Breast epithelium (tissue), 4 donors: ENCODE measurements at regions of chr5 and their contacts with region 1.

Region 1: DNA sequence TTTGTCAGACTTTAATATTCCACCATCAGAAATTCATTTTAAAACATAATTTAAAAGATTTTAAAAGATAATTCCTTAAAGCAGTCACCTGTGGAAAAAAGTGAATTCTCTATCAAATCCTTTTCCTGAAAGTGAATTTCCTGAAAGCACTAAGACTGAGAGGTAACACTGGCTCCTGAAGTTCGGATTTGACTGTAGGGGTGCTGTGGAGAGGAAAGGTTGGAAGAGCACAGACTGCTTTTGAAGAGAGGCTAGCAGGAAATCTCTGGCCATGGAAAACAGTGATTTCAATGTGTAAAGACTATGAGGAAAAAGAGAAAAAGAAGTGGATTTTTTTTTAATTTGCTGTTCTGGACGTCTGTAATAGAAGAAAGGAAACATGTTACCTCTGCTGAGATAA is 35.7 kb upstream of the TMEM161B start:
- DNase-seq: no peak
- H3K4me3 ChIP-seq: no peak overlapping the region
- H3K27ac ChIP-seq: no peak overlapping the region
- H3K4me1 ChIP-seq: no peaks in the 10 kb centered on the region
- H3K27me3 ChIP-seq: no peaks in the 10 kb centered on the region
- CTCF ChIP-seq: no peak
- POLR2A ChIP-seq: no peak

Region 2: DNA sequence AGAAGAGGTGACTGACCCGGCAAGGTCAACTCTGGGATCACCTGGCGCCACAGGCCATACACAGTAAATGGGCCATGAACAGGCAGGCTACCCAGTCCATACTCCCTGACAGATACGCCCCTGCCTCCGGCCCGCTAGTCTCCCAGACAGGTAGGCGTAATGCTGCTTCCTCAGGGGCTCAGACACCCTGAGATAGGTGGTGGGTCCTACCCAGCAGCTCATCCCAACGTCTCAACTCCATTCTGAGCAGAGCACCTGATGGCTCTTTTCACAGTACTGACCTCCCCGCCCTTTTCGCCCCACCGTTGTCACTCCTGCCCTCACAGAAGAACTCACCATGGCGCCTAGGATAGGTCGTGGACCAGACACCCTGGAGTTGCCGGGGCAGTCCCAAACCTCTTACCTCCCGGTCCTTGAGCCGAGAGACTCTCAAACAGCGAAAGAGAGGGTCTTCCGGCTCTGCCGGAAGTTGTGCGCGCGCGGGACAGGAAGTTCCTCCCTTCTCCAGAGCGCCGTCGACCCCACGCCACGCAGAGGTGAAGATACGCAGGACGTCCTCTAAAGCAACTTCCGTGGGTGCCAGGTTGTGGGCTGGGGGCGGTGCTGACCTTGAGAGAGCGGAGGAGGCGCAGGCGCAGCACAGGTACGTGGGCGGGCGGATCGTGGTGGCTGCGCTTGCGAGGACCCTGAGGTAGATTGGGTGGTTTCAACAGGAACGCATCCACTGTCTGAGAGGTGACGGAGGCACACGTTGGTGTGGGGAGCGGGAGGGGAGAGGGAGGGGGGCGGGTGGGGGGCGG is 35.8 kb before region 1 on chr5 and contains the start of gene TMEM161B:
- intact Hi-C with region 1: loop called (anchors 2 kb)
- DNase-seq: peak; percentile 88 to 89
- H3K4me3 ChIP-seq: peak within 1 kb of the TSS; percentile 81 to 93 (median 92)
- H3K27ac ChIP-seq: peak within 1 kb of the TSS; percentile 86 to 87
- H3K4me1 ChIP-seq: no peaks in the 10 kb centered on the region
- H3K27me3 ChIP-seq: no peaks in the 10 kb centered on the region
- CTCF ChIP-seq: no peak
- POLR2A ChIP-seq: no peak
- total RNA-seq, gene TMEM161B: 13.1 to 31.8 (median 28.5) TPM

Region 3: DNA sequence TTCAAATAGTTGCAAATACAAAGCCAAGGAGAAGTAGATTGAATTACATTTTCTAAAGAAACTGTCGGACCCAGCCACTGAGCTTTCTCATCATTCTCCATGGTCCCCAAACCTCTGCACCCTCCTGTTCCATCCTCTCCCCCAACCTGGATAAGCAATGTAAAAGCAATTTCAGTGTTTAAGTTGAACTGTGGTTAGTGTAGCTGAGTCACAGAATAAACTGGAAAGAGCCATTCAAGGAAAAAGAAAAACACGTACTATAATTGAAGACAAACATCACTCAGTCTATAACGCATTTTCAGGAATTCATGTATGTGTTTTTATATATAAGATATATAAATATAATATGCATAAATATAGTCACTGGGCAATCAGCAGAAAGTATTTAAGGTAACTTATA is 18.4 kb after region 1 on chr5:
- intact Hi-C with region 1: no loop called
- DNase-seq: no peak
- H3K4me3 ChIP-seq: no peak overlapping the region
- H3K27ac ChIP-seq: no peak overlapping the region
- H3K4me1 ChIP-seq: no peaks in the 10 kb centered on the region
- H3K27me3 ChIP-seq: no peaks in the 10 kb centered on the region
- CTCF ChIP-seq: no peak
- POLR2A ChIP-seq: no peak

Region 4: GRCh38 chr5:88364991-88365390 is 60.6 kb after region 1 on chr5:
- intact Hi-C with region 1: no loop called
- DNase-seq: no peak
- H3K4me3 ChIP-seq: no peak overlapping the region
- H3K27ac ChIP-seq: no peak overlapping the region
- H3K4me1 ChIP-seq: no peaks in the 10 kb centered on the region
- H3K27me3 ChIP-seq: no peaks in the 10 kb centered on the region
- CTCF ChIP-seq: no peak
- POLR2A ChIP-seq: no peak

Region 5: GRCh38 chr5:89168766-89169165 is 864.4 kb after region 1 on chr5:
- intact Hi-C with region 1: no loop called
- DNase-seq: no peak
- H3K4me3 ChIP-seq: no peak overlapping the region
- H3K27ac ChIP-seq: no peak overlapping the region
- H3K4me1 ChIP-seq: no peaks in the 10 kb centered on the region
- H3K27me3 ChIP-seq: no peaks in the 10 kb centered on the region
- CTCF ChIP-seq: no peak
- POLR2A ChIP-seq: no peak